H1 (cell line): ENCODE measurements at regions of chr21 and their contacts with region 1.

Region 1: GRCh38 chr21:31866077-31866511 is 6.7 kb upstream of the HUNK start:
- DNase-seq: peak; percentile 82 to 98
- H3K4me3 ChIP-seq: no peak overlapping the region
- H3K27ac ChIP-seq: no peak overlapping the region
- H3K4me1 ChIP-seq: no peaks in the 10 kb centered on the region
- H3K27me3 ChIP-seq: peaks cover 0 to 2% (median 0%) of the 10 kb centered on the region in 4 experiments; a peak in 2 of 7 replicates
- CTCF ChIP-seq: peak; percentile 62 to 95 (median 81)
- EP300 ChIP-seq: no peak
- POLR2A ChIP-seq: no peak
- RAD21 ChIP-seq: peak; percentile 72 to 79

Region 2: DNA sequence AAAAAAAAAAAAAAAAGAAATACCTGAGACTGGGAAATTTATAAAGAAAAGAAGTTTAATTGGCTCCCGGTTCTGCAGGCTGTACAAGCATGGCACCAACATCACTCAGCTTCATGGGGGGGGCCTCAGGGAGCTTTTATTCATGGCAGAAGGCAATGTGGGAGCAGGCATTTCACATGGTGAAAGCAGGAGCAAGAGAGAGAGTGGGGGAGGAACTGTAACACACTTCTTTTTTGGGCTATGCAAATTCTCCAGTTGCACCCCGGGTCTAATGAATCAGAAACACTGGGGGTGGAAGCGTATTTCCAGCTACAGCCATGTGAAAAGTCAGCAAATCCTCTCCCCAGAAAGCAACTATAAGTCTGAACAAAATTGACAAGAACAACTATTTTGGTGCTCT is 218.4 kb before region 1 on chr21:
- CTCF ChIA-PET with region 1: no interaction called
- POLR2A ChIA-PET with region 1: no interaction called
- DNase-seq: no peak
- H3K4me3 ChIP-seq: no peak overlapping the region
- H3K27ac ChIP-seq: no peak overlapping the region
- H3K4me1 ChIP-seq: no peaks in the 10 kb centered on the region
- H3K27me3 ChIP-seq: no peaks in the 10 kb centered on the region
- CTCF ChIP-seq: no peak
- EP300 ChIP-seq: no peak
- POLR2A ChIP-seq: no peak
- RAD21 ChIP-seq: no peak

Region 3: DNA sequence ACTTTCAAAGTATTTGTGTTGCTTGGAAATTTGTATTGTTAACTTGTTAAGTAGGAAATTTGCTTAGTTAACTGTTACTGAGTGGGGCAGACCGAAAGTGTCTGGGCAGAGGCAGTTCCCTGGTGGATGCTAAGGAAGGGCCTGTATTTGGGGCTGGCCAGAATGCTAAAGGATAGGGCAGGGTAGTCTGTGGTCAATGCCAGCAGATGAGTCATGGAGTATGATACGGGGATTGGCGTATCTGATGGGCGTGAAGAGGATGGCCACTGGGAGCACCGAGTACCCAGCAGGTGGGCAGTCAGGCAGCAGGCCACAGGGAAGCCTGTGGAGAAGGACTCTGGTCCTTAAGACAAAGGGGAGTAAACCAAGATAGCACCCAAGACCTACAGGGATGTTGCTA is 87.5 kb before region 1 on chr21:
- CTCF ChIA-PET with region 1: no interaction called
- POLR2A ChIA-PET with region 1: no interaction called
- DNase-seq: no peak
- H3K4me3 ChIP-seq: no peak overlapping the region
- H3K27ac ChIP-seq: no peak overlapping the region
- H3K4me1 ChIP-seq: no peaks in the 10 kb centered on the region
- H3K27me3 ChIP-seq: no peaks in the 10 kb centered on the region
- CTCF ChIP-seq: no peak
- EP300 ChIP-seq: no peak
- POLR2A ChIP-seq: no peak
- RAD21 ChIP-seq: no peak

Region 4: DNA sequence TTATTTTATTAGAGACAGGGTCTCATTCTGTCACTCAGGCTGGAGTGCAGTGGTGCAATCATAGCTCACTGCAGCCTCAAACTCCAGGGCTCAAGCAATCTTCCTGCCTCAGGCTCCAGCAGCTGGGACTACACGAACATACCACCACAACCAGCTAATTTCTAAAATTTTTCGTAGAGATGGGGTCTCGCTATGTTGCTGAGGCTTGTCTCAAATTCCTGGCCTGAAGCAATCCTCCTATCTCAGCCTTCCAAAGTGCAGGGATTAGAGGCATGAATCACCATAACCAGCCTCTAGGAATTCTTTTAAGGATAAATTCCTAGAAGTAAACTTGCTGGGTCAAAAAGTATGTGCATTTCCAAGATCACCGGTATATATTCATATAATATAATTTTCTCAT is 10.9 kb before region 1 on chr21:
- CTCF ChIA-PET with region 1: interaction called, 14 read pairs
- POLR2A ChIA-PET with region 1: no interaction called
- DNase-seq: no peak
- H3K4me3 ChIP-seq: no peak overlapping the region
- H3K27ac ChIP-seq: no peak overlapping the region
- H3K4me1 ChIP-seq: no peaks in the 10 kb centered on the region
- H3K27me3 ChIP-seq: no peaks in the 10 kb centered on the region
- CTCF ChIP-seq: no peak
- EP300 ChIP-seq: no peak
- POLR2A ChIP-seq: no peak
- RAD21 ChIP-seq: no peak